Calu3 (cell line): ENCODE measurements at regions of chr10 and their contacts with region 1.

Region 1: DNA sequence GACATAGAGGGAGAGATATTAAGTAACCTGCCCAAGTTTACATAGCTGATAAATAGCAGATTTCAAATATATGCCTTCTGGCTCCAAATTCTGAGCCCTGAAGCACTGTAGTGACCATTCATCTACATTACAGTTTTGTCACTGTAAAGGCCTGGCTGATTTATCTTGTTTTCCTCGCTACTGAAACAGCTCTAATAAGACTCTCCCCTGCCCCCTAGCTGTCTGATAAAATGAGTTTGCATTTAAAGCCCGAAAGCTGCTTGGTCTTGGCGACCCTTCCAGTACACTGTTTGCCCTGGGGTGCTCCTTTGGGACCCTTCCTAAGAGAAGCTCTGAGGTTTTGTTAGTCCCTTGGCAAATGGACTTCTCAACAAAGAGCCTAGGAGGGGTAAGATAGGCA is 59.7 kb upstream of the RAB11FIP2 start:
- DNase-seq: peak; percentile 15
- H3K4me3 Mint-ChIP-seq: no peak overlapping the region
- H3K27ac Mint-ChIP-seq: no peak overlapping the region
- H3K4me1 Mint-ChIP-seq: no peaks in the 10 kb centered on the region
- H3K27me3 Mint-ChIP-seq: no peaks in the 10 kb centered on the region
- CTCF ChIP-seq: no peak

Region 2: GRCh38 chr10:117537436-117537903 is 569.0 kb before region 1 on chr10:
- CTCF ChIA-PET with region 1: no interaction called
- intact Hi-C with region 1: loop called (anchors 1 kb)
- DNase-seq: peak; percentile 28
- H3K4me3 Mint-ChIP-seq: no peak overlapping the region
- H3K27ac Mint-ChIP-seq: no peak overlapping the region
- H3K4me1 Mint-ChIP-seq: no peaks in the 10 kb centered on the region
- H3K27me3 Mint-ChIP-seq: peaks cover 55% of the 10 kb centered on the region
- CTCF ChIP-seq: peak; percentile 59

Region 3: DNA sequence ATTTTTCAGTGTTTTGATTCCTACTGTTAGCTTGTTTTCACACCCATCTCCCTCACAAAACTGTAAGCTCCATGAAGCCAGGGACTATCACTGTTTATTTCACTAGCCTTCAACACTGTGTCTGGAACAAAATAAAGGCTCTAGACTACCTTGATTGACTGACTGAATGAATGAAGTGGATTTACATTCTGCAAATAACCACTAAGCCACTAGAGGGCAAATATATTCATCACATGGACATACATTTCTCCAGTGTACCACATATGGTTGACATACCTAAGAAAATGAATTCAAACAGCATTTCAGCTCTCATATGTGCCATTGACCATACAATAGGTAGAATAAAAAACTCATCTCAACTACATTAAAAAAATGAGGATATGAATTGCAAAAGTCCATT is 245.6 kb before region 1 on chr10:
- CTCF ChIA-PET with region 1: no interaction called
- intact Hi-C with region 1: loop called (anchors 10 kb)
- DNase-seq: no peak
- H3K4me3 Mint-ChIP-seq: no peak overlapping the region
- H3K27ac Mint-ChIP-seq: no peak overlapping the region
- H3K4me1 Mint-ChIP-seq: no peaks in the 10 kb centered on the region
- H3K27me3 Mint-ChIP-seq: no peaks in the 10 kb centered on the region
- CTCF ChIP-seq: no peak